ENCODE measurements at regions of chr11 and their contacts with region 1.

Region 1: GRCh38 chr11:61254403-61255025 is 13.5 kb downstream of the PGA5 start:
- DNase-seq: peak; percentile 91
- H3K4me3 Mint-ChIP-seq: no peak overlapping the region
- H3K27ac Mint-ChIP-seq: no peak overlapping the region
- H3K4me1 Mint-ChIP-seq: no peaks in the 10 kb centered on the region
- H3K27me3 Mint-ChIP-seq: peaks cover 3% of the 10 kb centered on the region

Region 2: DNA sequence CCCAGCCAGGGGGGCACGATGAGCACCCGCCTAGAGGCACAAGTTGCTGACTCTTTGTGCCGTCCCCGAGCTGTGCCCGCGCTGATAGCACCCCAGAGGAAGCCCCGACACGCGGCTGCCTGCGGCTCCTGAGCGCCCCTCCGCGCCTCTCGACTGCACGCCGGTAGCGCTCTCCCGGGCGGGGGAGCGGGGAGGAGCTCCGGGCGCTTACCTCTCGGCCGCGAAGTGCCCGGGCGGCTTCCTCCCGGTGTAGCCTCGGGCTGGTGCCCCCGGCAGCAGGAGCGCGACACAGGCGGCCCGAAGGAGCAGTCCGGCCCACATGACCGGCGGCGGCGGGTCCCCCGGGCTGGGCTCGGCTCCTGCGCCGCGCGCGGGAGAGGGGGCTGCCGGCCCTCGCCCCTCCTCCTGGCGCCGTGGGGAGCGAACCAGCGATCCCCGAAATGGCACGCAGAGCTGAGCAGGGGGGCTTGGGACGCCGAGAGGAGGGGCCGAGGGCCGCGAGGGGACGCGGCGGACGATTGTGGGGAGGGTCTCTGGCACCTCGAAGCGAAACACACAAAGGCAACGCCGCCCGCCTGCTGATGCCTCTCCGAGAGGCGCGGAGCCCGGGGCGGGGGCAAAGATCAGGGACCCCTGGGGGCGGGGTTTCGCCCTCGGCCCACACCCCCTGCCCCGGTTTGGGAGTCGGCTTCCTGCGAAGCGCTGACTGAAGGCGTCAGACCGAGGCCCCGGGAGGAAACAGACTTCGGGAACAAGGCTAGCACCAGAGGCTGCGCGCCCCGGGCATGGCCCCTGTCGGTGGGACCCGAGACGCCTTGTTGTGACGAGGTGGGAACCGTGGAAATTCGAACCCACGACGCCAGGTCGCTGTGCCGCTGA is 40.4 kb after region 1 on chr11 and contains the start of gene VWCE:
- intact Hi-C with region 1: loop called (anchors 1 kb)
- DNase-seq: peak; percentile 92
- H3K4me3 Mint-ChIP-seq: peak within 1 kb of the TSS; percentile 89
- H3K27ac Mint-ChIP-seq: peak within 1 kb of the TSS; percentile 89
- H3K4me1 Mint-ChIP-seq: peaks cover 23% of the 10 kb centered on the region
- H3K27me3 Mint-ChIP-seq: peaks cover 13% of the 10 kb centered on the region
- total RNA-seq, gene VWCE: 10.6 and 12.4 TPM in 2 replicates

Region 3: DNA sequence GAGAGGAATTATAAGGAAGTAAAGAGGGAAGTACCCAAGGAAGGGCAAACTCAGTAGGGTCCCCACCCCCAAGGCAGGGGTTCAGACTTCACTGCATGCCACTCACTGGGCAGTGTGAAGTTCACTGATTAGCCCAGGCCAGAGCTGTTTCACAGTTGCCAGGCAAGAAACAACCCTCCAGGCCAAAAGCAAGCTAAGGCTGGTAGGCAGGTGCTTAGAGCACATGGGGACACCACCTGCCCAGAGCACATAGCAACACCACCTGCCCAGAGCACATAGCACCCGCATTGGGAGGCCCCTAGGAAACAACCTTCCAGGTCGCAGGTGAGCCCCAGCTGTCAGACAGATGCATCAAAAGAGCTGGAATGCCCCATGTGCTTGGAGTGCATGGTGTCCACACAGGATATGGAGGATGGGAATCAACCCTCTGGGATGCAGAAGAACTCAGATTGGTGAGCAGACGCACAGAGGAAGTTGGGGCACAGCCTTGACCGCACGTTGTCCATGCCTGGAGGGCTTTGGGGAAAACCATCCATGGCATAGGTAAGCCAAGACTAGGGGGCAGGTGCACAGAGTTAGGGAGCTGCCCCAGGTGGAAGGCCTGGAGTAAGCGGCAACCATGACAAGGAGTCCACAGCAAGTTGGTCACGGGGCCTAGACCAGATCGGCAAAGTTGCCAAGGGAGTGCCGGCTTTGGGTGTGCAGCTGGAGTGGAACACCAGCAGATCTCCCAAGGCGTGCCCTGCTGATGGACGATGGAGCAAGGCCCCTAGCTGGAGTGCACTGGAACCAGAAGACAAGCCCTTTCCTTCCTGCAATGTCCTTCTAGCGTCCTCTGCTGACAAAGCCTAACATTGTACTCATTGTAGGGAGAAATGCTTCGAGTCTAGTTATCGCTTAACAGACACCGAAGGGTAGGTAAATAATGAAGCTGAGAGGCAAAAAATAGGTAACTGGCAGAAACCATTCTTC is 130.0 kb after region 1 on chr11:
- intact Hi-C with region 1: loop called (anchors 1 kb)
- DNase-seq: no peak
- H3K4me3 Mint-ChIP-seq: no peak overlapping the region
- H3K27ac Mint-ChIP-seq: no peak overlapping the region
- H3K4me1 Mint-ChIP-seq: peaks cover 6% of the 10 kb centered on the region
- H3K27me3 Mint-ChIP-seq: no peaks in the 10 kb centered on the region

Measured in activated CD4-positive, alpha-beta T cell treated with anti-CD3 and anti-CD28 coated beads, Interleukin-2, amount 10 ng/mL, durations not matched to agents 24 days and 14 days (primary cell).